Prostate gland (tissue), 2 donors: ENCODE measurements at regions of chr5 and their contacts with region 1.

Region 1: GRCh38 chr5:67003935-67004729 is 192.5 kb downstream of the CD180 start:
- DNase-seq: peak; percentile 91
- H3K4me3 ChIP-seq: peak overlapping the region; percentile 48 to 50
- H3K27ac ChIP-seq: peak overlapping the region; percentile 84 to 85
- H3K4me1 ChIP-seq: no peaks in the 10 kb centered on the region
- H3K27me3 ChIP-seq: no peaks in the 10 kb centered on the region
- CTCF ChIP-seq: no peak
- POLR2A ChIP-seq: peak; percentile 87

Region 2: GRCh38 chr5:67089200-67089725 is 85.1 kb after region 1 on chr5:
- intact Hi-C with region 1: loop called (anchors 5 kb)
- DNase-seq: no peak
- H3K4me3 ChIP-seq: no peak overlapping the region
- H3K27ac ChIP-seq: peak overlapping the region in 1 of 2 donors; percentile 6
- H3K4me1 ChIP-seq: no peaks in the 10 kb centered on the region
- H3K27me3 ChIP-seq: no peaks in the 10 kb centered on the region
- CTCF ChIP-seq: no peak
- POLR2A ChIP-seq: no peak